B cell (primary cell): ENCODE measurements at regions of chr14 and their contacts with region 1.

Region 1: DNA sequence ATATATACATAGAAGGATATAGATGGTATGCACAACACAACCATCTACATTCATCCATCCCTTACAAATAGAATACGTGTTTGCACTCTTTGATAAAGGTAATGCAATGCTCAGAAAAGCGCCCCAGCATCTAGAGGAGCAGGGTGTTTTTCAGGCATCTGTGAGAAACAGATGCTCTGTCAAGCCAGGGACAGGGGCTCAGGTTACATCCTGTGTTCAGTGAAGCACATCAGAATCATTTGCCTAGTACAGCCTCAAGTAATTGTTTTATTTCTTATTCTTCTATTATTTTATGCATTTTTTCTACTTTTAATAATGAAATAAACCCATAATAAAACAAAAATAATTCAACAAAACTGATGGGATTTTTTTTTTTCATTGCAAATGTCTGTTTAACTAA is 50.5 kb upstream of the HIF1A start:
- DNase-seq: peak; percentile 53
- ATAC-seq: peak; percentile 76
- H3K4me3 ChIP-seq: no peak overlapping the region
- H3K4me3 Mint-ChIP-seq: no peak overlapping the region
- H3K27ac ChIP-seq: peak overlapping the region in 1 of 2 donors; percentile 54
- H3K27ac Mint-ChIP-seq: peak overlapping the region; percentile 38
- H3K4me1 ChIP-seq: peaks cover 30 to 31% of the 10 kb centered on the region in 2 donors
- H3K4me1 Mint-ChIP-seq: peaks cover 33% of the 10 kb centered on the region
- H3K27me3 ChIP-seq: no peaks in the 10 kb centered on the region
- H3K27me3 Mint-ChIP-seq: no peaks in the 10 kb centered on the region
- CTCF ChIP-seq: no peak

Region 2: DNA sequence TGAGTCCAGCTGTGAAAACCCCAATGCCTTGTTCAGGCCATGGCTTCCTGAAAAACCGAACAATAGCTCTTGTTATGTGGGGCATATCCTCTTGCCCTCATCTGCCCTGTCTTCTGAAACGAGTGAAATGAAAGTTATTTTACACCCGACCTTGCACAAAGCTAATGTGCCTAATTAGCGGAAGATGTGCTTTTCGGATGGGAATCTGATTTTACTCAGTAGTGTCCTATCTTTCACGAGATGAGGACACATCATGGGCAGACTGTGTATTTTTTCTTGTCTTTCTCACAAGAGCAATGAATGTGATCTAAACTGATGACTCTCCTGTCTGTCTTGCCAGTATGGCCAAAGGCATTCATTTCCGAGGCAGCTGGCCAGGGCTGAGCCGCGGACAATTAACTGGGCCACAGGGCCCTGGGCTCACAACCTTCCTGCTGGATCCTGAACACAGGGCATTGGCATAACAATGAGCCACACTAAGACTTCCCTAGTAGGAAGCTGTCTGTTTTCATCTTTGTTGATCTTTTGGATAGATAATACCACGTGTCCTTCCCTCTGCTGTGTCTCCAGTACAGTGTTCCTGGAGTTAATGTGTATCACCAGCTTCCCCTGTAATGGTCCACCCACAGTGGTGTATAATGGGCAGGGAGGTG is 35.5 kb before region 1 on chr14:
- CTCF ChIA-PET with region 1: no interaction called
- POLR2A ChIA-PET with region 1: no interaction called
- intact Hi-C with region 1: loop called (anchors 5 kb)
- DNase-seq: no peak
- ATAC-seq: no peak
- H3K4me3 ChIP-seq: no peak overlapping the region
- H3K4me3 Mint-ChIP-seq: no peak overlapping the region
- H3K27ac ChIP-seq: no peak overlapping the region
- H3K27ac Mint-ChIP-seq: no peak overlapping the region
- H3K4me1 ChIP-seq: peaks cover 5 to 11% of the 10 kb centered on the region in 2 donors
- H3K4me1 Mint-ChIP-seq: peaks cover 9% of the 10 kb centered on the region
- H3K27me3 ChIP-seq: no peaks in the 10 kb centered on the region
- H3K27me3 Mint-ChIP-seq: no peaks in the 10 kb centered on the region
- CTCF ChIP-seq: no peak